ENCODE measurements at regions of chr11 and their contacts with region 1.

Region 1: GRCh38 chr11:32006799-32007388 is 84.0 kb upstream of the RCN1 start:
- DNase-seq: no peak
- H3K4me3 ChIP-seq: no peak overlapping the region
- H3K27ac ChIP-seq: no peak overlapping the region
- H3K4me1 ChIP-seq: peaks cover 0 to 4% (median 0%) of the 10 kb centered on the region in 4 experiments; a peak in 2 of 7 replicates
- H3K27me3 ChIP-seq: no peaks in the 10 kb centered on the region
- CTCF ChIP-seq: peak; percentile 57 to 83 (median 64)
- EP300 ChIP-seq: no peak
- POLR2A ChIP-seq: no peak
- RAD21 ChIP-seq: peak; percentile 76 to 84

Region 2: DNA sequence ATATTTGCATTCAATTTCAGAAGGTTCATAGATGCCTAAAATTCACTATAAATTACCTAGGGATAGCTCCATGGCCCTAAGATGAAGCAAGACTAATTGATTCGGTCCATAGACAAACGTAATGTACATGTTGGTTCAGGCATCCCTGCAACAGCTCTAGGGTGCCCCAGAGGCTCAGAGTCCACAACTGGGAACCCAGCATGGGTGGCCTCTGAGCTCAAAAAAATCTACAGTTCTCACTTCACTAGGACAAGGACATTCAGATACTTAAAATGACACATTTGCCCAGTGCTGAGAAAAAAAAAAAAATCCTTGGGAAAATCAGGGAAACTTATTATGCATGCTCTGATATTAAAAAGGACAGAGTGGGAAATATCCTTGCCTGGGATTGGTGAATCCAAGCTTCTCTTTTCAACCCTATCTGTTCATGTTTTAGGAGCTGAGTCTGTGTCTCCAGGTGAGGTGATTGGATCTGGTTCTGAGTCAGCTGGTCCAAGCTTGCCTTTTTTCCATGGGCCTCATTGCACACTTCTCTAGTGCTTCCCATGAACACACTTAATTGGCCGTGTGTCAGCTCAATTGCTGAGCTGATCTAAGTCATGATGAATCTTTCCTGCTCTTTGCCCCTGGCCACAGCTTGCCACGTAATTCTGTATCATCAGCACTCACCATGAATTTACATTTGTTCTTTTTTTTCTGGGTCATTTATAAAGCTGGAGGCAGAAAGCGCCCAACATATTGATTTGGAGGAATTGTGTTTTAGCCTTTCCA is 32.3 kb before region 1 on chr11:
- CTCF ChIA-PET with region 1: interaction called, 11 read pairs
- POLR2A ChIA-PET with region 1: no interaction called
- DNase-seq: no peak
- H3K4me3 ChIP-seq: no peak overlapping the region
- H3K27ac ChIP-seq: no peak overlapping the region
- H3K4me1 ChIP-seq: no peaks in the 10 kb centered on the region
- H3K27me3 ChIP-seq: no peaks in the 10 kb centered on the region
- CTCF ChIP-seq: no peak
- EP300 ChIP-seq: no peak
- POLR2A ChIP-seq: no peak
- RAD21 ChIP-seq: no peak

Region 3: GRCh38 chr11:31987118-31988005 is 19.5 kb before region 1 on chr11:
- CTCF ChIA-PET with region 1: interaction called, 12 read pairs
- POLR2A ChIA-PET with region 1: no interaction called
- DNase-seq: peak; percentile 1 to 80
- H3K4me3 ChIP-seq: peak overlapping the region; percentile 14 to 64 (median 44)
- H3K27ac ChIP-seq: no peak overlapping the region
- H3K4me1 ChIP-seq: peaks cover 0 to 3% (median 1%) of the 10 kb centered on the region in 4 experiments; a peak in 3 of 7 replicates
- H3K27me3 ChIP-seq: peaks cover 0 to 9% (median 8%) of the 10 kb centered on the region in 4 experiments; a peak in 6 of 7 replicates
- CTCF ChIP-seq: no peak
- EP300 ChIP-seq: no peak
- POLR2A ChIP-seq: no peak
- RAD21 ChIP-seq: peak in 1 of 2 experiments; percentile 2; a peak in 2 of 4 replicates

Region 4: DNA sequence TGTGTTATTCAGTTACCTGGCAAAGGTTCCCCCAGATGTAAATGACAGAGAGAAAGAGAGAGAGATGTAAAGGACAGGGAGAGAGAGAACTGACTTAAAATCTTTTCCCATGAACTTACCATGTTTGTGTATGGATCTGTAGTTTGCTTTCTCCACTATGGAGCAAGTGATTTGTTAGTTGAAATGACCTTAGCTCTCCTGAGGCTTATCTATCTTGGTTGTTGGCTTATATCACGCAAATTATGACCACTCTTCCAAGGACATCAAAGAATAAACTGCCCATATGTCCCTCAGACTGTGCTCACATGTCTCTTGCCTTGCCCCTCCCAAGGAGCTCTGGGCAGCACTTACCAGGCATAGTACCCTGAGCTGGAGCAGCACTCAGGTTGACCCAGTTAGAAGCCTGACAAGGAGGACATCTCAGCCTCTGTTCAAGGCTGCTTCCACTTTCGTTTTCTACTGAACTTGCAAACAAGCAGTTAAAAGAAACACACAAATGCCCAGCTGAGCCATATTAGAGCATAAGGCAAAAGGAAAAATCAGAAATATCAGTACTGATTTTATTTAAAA is 11.3 kb before region 1 on chr11:
- CTCF ChIA-PET with region 1: interaction called, 12 read pairs
- POLR2A ChIA-PET with region 1: no interaction called
- DNase-seq: no peak
- H3K4me3 ChIP-seq: no peak overlapping the region
- H3K27ac ChIP-seq: no peak overlapping the region
- H3K4me1 ChIP-seq: no peaks in the 10 kb centered on the region
- H3K27me3 ChIP-seq: no peaks in the 10 kb centered on the region
- CTCF ChIP-seq: no peak
- EP300 ChIP-seq: no peak
- POLR2A ChIP-seq: no peak
- RAD21 ChIP-seq: no peak